ENCODE measurements at regions of chr12 and their contacts with region 1.

Region 1: GRCh38 chr12:66130277-66131066 is at the start of gene LLPH:
- DNase-seq: peak; percentile 67 to 82
- ATAC-seq: peak; percentile 94 to 97
- H3K4me3 ChIP-seq: peak within 1 kb of the TSS; percentile 73 to 89 (median 81)
- H3K27ac ChIP-seq: peak within 1 kb of the TSS; percentile 45 to 80 (median 74)
- H3K4me1 ChIP-seq: peaks cover 12 to 17% of the 10 kb centered on the region in 2 donors
- H3K27me3 ChIP-seq: no peaks in the 10 kb centered on the region
- CTCF ChIP-seq: no peak
- POLR2A ChIP-seq: peak; percentile 39 to 75
- total RNA-seq, gene LLPH: 9.5 to 21.4 (median 12.5) TPM

Region 2: GRCh38 chr12:66169221-66170170 is 39.0 kb after region 1 on chr12 and contains the start of gene TMBIM4:
- in situ Hi-C with region 1: no loop called
- intact Hi-C with region 1: loop called (anchors 2 kb)
- DNase-seq: peak; percentile 77 to 78
- ATAC-seq: peak; percentile 93 to 95
- H3K4me3 ChIP-seq: peak within 1 kb of the TSS; percentile 82 to 98 (median 94)
- H3K27ac ChIP-seq: peak within 1 kb of the TSS; percentile 93 to 98 (median 94)
- H3K4me1 ChIP-seq: peaks cover 15 to 23% of the 10 kb centered on the region in 2 donors
- H3K27me3 ChIP-seq: no peaks in the 10 kb centered on the region
- CTCF ChIP-seq: peak; percentile 52 to 72 (median 60)
- POLR2A ChIP-seq: peak; percentile 49 to 54
- total RNA-seq, gene TMBIM4: 73.5 to 110 (median 80.9) TPM

Region 3: GRCh38 chr12:66301944-66302826 is 171.7 kb after region 1 on chr12 and contains the start of gene HELB:
- in situ Hi-C with region 1: no loop called
- intact Hi-C with region 1: loop called (anchors 10 kb)
- DNase-seq: peak; percentile 93 to 95
- ATAC-seq: peak; percentile 97 to 99
- H3K4me3 ChIP-seq: peak within 1 kb of the TSS; percentile 62 to 88 (median 77)
- H3K27ac ChIP-seq: peak within 1 kb of the TSS; percentile 69 to 80 (median 74)
- H3K4me1 ChIP-seq: peaks cover 9 to 15% of the 10 kb centered on the region in 2 donors
- H3K27me3 ChIP-seq: no peaks in the 10 kb centered on the region
- CTCF ChIP-seq: no peak
- POLR2A ChIP-seq: peak in 1 of 2 donors; percentile 47
- total RNA-seq, gene HELB: 0.49 to 1.2 (median 0.82) TPM

Region 4: GRCh38 chr12:66409195-66409871 is 278.9 kb after region 1 on chr12:
- in situ Hi-C with region 1: loop called in 1 of 4 experiments (anchors 25 kb)
- intact Hi-C with region 1: no loop called
- DNase-seq: no peak
- ATAC-seq: no peak
- H3K4me3 ChIP-seq: no peak overlapping the region
- H3K27ac ChIP-seq: no peak overlapping the region
- H3K4me1 ChIP-seq: no peaks in the 10 kb centered on the region
- H3K27me3 ChIP-seq: no peaks in the 10 kb centered on the region
- CTCF ChIP-seq: peak in 4 of 5 experiments; percentile 20 to 56 (median 35)
- POLR2A ChIP-seq: no peak